RWPE1 (cell line): ENCODE measurements at regions of chr12 and their contacts with region 1.

Region 1: DNA sequence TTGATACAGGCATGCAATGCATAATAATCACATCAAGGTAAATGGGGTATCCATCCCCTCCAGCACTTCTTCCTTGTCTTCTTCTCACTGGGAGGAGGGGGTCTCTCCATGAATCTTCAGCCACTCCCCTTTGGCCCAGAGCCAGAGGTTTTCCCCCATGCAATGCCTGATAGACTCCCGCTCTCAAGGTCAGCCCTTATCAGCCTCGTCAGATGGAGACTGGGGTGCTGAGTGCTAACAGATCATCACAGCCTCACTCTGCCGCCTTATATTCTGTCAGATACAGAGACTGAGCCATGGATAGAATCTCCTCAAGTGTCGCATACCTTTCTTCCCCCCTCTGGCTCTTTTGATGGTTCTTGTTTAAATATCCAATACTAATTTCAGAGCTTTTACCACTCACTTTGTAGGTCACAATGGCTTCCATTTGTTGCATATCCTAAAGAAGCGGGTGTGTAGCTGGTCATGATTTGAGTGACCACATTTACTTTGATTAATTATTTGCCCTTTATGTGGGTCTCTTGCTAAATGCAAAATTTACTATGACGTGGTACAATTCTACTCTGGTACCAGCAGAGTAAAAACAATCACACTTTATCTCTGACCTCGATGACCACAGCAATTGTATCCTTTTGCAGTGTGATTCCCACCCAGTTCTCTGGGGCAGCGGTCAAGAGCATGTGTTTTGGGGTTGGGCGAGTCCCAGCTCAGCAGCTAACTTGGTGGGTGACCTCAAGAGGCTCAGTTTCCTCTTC is 503.2 kb downstream of the AACS start:
- DNase-seq: no peak
- H3K27ac ChIP-seq: no peak overlapping the region
- CTCF ChIP-seq: no peak

Region 2: DNA sequence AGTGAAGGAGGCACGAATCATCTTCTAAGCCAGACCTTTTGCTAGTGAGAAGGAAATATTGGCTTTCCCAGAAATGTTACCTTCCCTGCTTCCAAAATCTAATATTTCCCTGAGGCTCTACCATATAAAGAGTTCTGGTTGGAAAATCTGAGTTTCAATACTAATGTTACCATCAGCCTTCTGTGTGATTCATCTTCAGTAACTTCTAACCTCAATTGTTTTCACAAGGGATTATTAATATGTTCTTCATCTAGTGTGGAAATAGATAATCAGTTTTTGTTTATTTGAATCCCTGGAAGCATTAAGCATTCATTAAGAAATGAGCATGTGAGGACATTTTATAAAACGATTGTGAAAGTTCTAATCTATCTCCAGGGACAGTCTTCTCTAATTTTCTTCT is 217.7 kb after region 1 on chr12:
- CTCF ChIA-PET with region 1: interaction called, 10 read pairs
- POLR2A ChIA-PET with region 1: no interaction called
- DNase-seq: no peak
- H3K27ac ChIP-seq: no peak overlapping the region
- CTCF ChIP-seq: no peak